ENCODE measurements at regions of chr22 and their contacts with region 1.

Region 1: GRCh38 chr22:36699915-36700314 is 3.6 kb downstream of the CACNG2 start:
- DNase-seq: no peak
- H3K4me3 ChIP-seq: no peak overlapping the region
- H3K27ac ChIP-seq: no peak overlapping the region
- H3K4me1 ChIP-seq: no peaks in the 10 kb centered on the region
- H3K27me3 ChIP-seq: no peaks in the 10 kb centered on the region
- CTCF ChIP-seq: no peak
- POLR2A ChIP-seq: no peak

Region 2: GRCh38 chr22:36636916-36637315 is 63.0 kb before region 1 on chr22:
- intact Hi-C with region 1: loop called (anchors 10 kb)
- DNase-seq: no peak
- H3K4me3 ChIP-seq: no peak overlapping the region
- H3K27ac ChIP-seq: no peak overlapping the region
- H3K4me1 ChIP-seq: no peaks in the 10 kb centered on the region
- H3K27me3 ChIP-seq: no peaks in the 10 kb centered on the region
- CTCF ChIP-seq: no peak
- POLR2A ChIP-seq: no peak

Measured in testis (tissue), 5 donors.